Gastrocnemius medialis (tissue), 4 donors: ENCODE measurements at regions of chr10 and their contacts with region 1.

Region 1: GRCh38 chr10:109411917-109412316 is 511.4 kb downstream of the XPNPEP1 start:
- DNase-seq: no peak
- ATAC-seq: no peak
- H3K4me3 ChIP-seq: no peak overlapping the region
- H3K27ac ChIP-seq: no peak overlapping the region
- H3K4me1 ChIP-seq: no peaks in the 10 kb centered on the region
- H3K27me3 ChIP-seq: no peaks in the 10 kb centered on the region
- CTCF ChIP-seq: no peak
- POLR2A ChIP-seq: no peak

Region 2: DNA sequence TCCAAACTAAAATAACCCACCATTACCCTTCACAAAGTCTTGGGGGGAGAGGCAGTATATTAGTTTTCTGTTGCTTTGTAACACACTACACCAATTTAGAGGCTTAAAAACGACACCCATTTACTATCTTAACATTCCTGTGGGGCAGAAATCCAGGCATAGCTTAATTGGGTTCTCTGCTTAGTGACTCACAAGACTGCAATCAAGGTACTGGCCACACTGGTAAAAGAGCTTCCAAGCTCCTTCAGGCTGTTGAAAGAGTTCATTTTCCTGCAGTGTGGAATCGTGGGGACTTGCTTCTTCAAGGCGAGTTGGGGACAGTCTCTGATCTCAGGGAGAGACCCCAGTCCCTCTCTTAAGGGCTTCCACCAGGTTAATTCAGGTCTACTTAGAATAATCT is 372.3 kb after region 1 on chr10:
- in situ Hi-C with region 1: loop called in 1 of 4 experiments (anchors 25 kb)
- intact Hi-C with region 1: no loop called
- DNase-seq: no peak
- ATAC-seq: no peak
- H3K4me3 ChIP-seq: no peak overlapping the region
- H3K27ac ChIP-seq: no peak overlapping the region
- H3K4me1 ChIP-seq: no peaks in the 10 kb centered on the region
- H3K27me3 ChIP-seq: no peaks in the 10 kb centered on the region
- CTCF ChIP-seq: no peak
- POLR2A ChIP-seq: no peak